GM13977 (cell line): ENCODE measurements at regions of chr3 and their contacts with region 1.

Region 1: GRCh38 chr3:187319699-187320302 is 28.3 kb upstream of the MASP1 start:
- DNase-seq: peak; percentile 47
- CTCF ChIP-seq: peak; percentile 83

Region 2: DNA sequence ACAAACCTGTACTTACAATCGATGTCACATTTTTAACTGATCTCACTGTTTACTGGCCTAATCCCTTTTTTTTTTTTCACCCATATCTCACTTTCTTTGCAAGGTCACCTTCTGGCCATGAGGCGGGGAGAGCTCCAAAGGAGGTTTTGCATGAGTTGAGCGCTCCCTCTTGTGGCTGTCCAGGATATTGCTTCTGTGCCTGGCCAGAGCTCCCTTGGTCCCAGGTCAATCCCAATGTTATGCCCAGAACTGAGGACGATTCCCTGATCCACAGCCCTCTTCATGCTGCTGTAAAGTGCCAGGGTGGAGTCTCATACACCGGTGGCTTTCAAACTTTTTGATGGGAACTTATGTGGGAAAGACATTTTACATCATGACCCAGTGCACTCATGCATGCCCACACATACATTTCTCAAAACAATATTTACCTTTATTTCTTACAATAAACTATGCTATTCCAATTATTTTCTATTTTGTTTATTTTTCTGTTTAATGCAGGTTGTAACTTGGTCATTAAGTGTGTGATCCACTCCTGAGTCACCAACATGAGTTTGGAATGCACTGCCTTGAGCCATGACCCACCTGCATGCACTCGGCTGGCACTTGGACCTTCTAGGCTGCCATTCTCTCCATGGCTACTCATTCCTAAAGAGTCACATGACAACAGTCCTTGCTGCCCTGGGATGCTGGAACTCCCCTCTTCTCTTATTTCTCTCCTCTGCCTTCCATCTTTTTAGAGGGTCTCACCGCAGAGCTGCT is 360.0 kb after region 1 on chr3:
- in situ Hi-C with region 1: loop called (anchors 5 kb)
- DNase-seq: peak; percentile 72
- CTCF ChIP-seq: peak; percentile 93